H1 (cell line): ENCODE measurements at regions of chr11 and their contacts with region 1.

Region 1: GRCh38 chr11:119134389-119134978 is 13.1 kb downstream of the HINFP start:
- DNase-seq: peak in 1 of 2 experiments; percentile 61
- H3K4me3 ChIP-seq: no peak overlapping the region
- H3K27ac ChIP-seq: no peak overlapping the region
- H3K4me1 ChIP-seq: no peaks in the 10 kb centered on the region
- H3K27me3 ChIP-seq: no peaks in the 10 kb centered on the region
- CTCF ChIP-seq: peak; percentile 62 to 83 (median 82)
- EP300 ChIP-seq: no peak
- POLR2A ChIP-seq: no peak
- RAD21 ChIP-seq: peak; percentile 31 to 42; a peak in 2 of 4 replicates

Region 2: GRCh38 chr11:119108146-119108856 is 26.2 kb before region 1 on chr11:
- CTCF ChIA-PET with region 1: interaction called, 25 read pairs
- POLR2A ChIA-PET with region 1: interaction called, 4 read pairs
- DNase-seq: peak in 1 of 2 experiments; percentile 63
- H3K4me3 ChIP-seq: peak overlapping the region; percentile 71 to 83 (median 75)
- H3K27ac ChIP-seq: no peak overlapping the region
- H3K4me1 ChIP-seq: peaks cover 0 to 20% (median 5%) of the 10 kb centered on the region in 4 experiments; a peak in 5 of 7 replicates
- H3K27me3 ChIP-seq: peaks cover 2 to 20% (median 15%) of the 10 kb centered on the region in 4 experiments
- CTCF ChIP-seq: no peak
- EP300 ChIP-seq: no peak
- POLR2A ChIP-seq: no peak
- RAD21 ChIP-seq: no peak

Region 3: GRCh38 chr11:119144825-119145486 is 10.5 kb after region 1 on chr11:
- CTCF ChIA-PET with region 1: interaction called, 100 read pairs
- POLR2A ChIA-PET with region 1: interaction called, 6 read pairs
- DNase-seq: peak in 1 of 2 experiments; percentile 80
- H3K4me3 ChIP-seq: no peak overlapping the region
- H3K27ac ChIP-seq: no peak overlapping the region
- H3K4me1 ChIP-seq: peaks cover 5 to 13% (median 9%) of the 10 kb centered on the region in 4 experiments
- H3K27me3 ChIP-seq: peaks cover 11 to 28% (median 21%) of the 10 kb centered on the region in 4 experiments
- CTCF ChIP-seq: peak; percentile 48 to 63 (median 63)
- EP300 ChIP-seq: no peak
- POLR2A ChIP-seq: no peak
- RAD21 ChIP-seq: peak; percentile 30 to 58; a peak in 3 of 4 replicates

Region 4: GRCh38 chr11:119155733-119156492 is 21.4 kb after region 1 on chr11:
- CTCF ChIA-PET with region 1: interaction called, 100 read pairs
- POLR2A ChIA-PET with region 1: interaction called, 3 read pairs
- DNase-seq: peak in 1 of 2 experiments; percentile 62
- H3K4me3 ChIP-seq: no peak overlapping the region
- H3K27ac ChIP-seq: no peak overlapping the region
- H3K4me1 ChIP-seq: peaks cover 0 to 5% (median 2%) of the 10 kb centered on the region in 4 experiments; a peak in 4 of 7 replicates
- H3K27me3 ChIP-seq: peaks cover 0 to 4% (median 3%) of the 10 kb centered on the region in 4 experiments; a peak in 5 of 7 replicates
- CTCF ChIP-seq: peak; percentile 29 to 48 (median 33)
- EP300 ChIP-seq: no peak
- POLR2A ChIP-seq: no peak
- RAD21 ChIP-seq: peak; percentile 10 to 14; a peak in 1 of 4 replicates

Region 5: DNA sequence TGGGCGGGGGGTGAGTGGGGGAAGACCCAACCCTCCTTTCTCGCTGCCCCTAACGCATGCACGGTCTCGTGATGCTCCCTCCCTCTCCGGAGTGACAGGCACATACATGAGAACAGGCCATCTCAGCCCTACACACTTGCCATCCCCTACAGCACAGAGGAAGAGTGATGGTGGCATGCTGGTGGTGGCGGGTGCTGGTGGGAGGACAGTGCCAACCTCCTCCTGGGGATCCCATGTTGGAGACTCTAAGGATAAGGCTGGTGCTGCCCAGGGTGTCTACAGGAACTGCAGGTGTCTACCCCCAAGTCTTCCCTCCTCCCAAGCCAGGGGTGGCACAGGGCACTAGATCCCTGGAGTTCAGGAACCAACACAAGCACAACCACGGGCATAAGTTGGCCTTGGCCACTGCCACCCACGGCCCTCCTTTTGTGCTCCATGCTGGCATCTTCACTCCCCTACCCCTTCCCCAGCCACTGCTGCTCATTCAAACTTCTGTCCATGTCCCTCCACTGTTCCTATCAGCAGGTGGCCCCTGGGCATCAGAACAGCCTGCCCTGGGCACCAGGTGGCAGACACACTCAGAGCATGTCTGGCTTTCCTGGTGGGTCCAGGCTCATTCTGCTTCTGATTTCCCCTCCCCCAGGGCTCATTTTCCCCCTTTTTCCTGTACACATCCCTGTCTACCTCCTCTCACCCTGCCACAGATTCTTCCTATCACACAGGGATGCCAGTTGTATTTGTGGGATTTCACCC is 27.6 kb after region 1 on chr11:
- CTCF ChIA-PET with region 1: interaction called, 389 read pairs
- POLR2A ChIA-PET with region 1: no interaction called
- DNase-seq: no peak
- H3K4me3 ChIP-seq: no peak overlapping the region
- H3K27ac ChIP-seq: no peak overlapping the region
- H3K4me1 ChIP-seq: peaks cover 0 to 8% (median 3%) of the 10 kb centered on the region in 4 experiments; a peak in 5 of 7 replicates
- H3K27me3 ChIP-seq: no peaks in the 10 kb centered on the region; a peak in 2 of 7 replicates
- CTCF ChIP-seq: no peak
- EP300 ChIP-seq: no peak
- POLR2A ChIP-seq: no peak
- RAD21 ChIP-seq: no peak